HEK293 (cell line): ENCODE measurements at regions of chr19 and their contacts with region 1.

Region 1: GRCh38 chr19:46840136-46840942 is 10.3 kb downstream of the AP2S1 start:
- H3K4me3 ChIP-seq: no peak overlapping the region
- H3K27ac ChIP-seq: no peak overlapping the region
- H3K4me1 ChIP-seq: peaks cover 7% of the 10 kb centered on the region
- CTCF ChIP-seq: peak; percentile 90

Region 2: GRCh38 chr19:46713781-46714443 is 126.4 kb before region 1 on chr19:
- CTCF ChIA-PET with region 1: no interaction called
- POLR2A ChIA-PET with region 1: no interaction called
- H3K4me3 ChIP-seq: peak overlapping the region; percentile 40
- H3K27ac ChIP-seq: no peak overlapping the region
- H3K4me1 ChIP-seq: peaks cover 15% of the 10 kb centered on the region
- CTCF ChIP-seq: no peak

Region 3: DNA sequence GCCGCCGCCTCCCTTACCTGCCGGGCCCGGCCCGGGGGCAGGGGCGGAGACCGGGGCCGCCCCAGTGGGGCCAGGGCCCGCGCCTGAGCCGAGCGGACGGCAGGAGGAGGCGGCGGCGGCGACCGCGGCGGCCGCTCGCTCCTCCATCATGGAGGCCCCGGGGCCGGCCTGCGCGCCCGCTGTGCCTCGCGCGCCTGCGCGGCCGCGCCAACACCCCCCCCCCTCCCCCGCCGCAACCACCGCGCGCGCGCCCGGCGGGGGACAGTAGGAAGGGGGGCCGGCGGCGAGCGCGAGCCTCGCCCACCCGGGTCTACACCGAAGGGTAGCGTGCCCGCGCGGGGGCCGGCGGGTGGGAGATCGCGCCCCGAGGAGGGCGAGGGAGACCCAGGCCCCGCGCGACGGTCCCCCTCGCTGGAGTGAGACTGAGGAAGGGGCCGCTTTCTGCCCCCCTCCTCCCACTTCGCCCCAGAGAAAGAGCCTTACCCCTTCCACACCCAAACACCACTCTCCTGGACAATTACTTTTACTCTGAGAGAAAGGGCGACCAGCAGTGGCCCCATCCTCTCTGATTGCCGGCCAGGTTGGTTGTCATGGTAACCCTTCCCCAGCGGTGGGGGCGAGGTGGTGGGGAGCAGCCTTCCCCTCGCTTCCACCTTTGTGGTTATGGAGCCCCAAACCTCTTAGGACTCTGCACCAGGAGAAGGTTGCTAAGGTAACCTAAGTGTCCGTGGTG is 93.9 kb before region 1 on chr19 and contains the start of gene STRN4:
- CTCF ChIA-PET with region 1: interaction called, 35 read pairs
- POLR2A ChIA-PET with region 1: no interaction called
- H3K4me3 ChIP-seq: peak within 1 kb of the TSS; percentile 70
- H3K27ac ChIP-seq: peak within 1 kb of the TSS; percentile 99
- H3K4me1 ChIP-seq: peaks cover 6% of the 10 kb centered on the region
- CTCF ChIP-seq: no peak

Region 4: GRCh38 chr19:46759817-46760333 is 80.5 kb before region 1 on chr19:
- CTCF ChIA-PET with region 1: interaction called, 83 read pairs
- POLR2A ChIA-PET with region 1: interaction called, 5 read pairs
- H3K4me3 ChIP-seq: no peak overlapping the region
- H3K27ac ChIP-seq: no peak overlapping the region
- H3K4me1 ChIP-seq: peaks cover 3% of the 10 kb centered on the region
- CTCF ChIP-seq: no peak

Region 5: DNA sequence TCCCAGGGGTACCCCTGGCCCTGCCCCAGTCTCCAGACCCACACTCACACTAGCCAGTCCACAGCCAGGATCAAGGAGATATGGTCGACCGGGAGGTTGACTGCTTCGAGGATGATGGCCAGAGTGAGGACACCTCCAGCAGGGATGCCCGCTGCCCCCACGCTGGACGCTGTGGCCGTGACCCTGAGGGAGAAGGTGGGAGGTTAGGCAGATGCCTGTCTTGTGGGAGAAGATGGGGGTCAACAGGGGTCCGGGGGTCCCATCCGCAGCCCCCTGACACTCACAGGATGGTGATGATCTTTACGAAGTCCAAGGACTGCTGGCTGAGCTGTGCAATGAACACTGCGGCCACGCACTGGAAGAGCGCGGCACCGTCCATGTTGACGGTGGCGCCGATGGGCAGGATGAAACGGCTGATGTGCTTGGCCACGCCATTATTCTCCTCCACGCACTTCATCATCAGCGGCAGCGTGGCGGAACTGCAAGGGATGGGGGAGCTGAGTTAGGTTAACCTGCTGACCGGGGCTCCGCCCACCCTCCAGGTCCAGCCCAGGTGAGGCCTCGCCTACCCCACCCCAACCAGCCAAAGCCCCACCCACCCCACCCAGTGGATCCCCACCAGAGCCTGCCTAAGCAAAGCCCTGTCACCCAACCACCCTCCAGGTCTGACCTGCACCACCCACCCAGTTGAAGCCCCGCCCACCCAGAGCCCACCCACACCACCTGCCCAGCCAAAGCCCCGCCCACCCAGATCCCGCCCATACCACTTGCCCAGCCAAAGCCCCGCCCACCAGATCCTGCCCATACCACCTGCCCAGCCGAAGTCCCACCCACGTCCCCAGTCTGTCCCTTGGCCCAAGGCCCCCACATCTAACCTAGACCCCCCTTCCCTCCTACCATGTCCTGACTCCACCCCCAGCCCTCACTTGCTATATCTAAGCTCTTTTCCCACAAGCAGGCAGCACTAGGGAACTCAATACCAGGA is 63.1 kb before region 1 on chr19:
- CTCF ChIA-PET with region 1: interaction called, 5 read pairs
- POLR2A ChIA-PET with region 1: interaction called, 10 read pairs
- H3K4me3 ChIP-seq: no peak overlapping the region
- H3K27ac ChIP-seq: no peak overlapping the region
- H3K4me1 ChIP-seq: no peaks in the 10 kb centered on the region
- CTCF ChIP-seq: no peak

Region 6: GRCh38 chr19:46821498-46822409 is 18.6 kb before region 1 on chr19:
- CTCF ChIA-PET with region 1: interaction called, 11 read pairs
- POLR2A ChIA-PET with region 1: interaction called, 6 read pairs
- H3K4me3 ChIP-seq: no peak overlapping the region
- H3K27ac ChIP-seq: no peak overlapping the region
- H3K4me1 ChIP-seq: peaks cover 7% of the 10 kb centered on the region
- CTCF ChIP-seq: no peak

Region 7: GRCh38 chr19:46850228-46851203 is 10.2 kb after region 1 on chr19 and contains the start of gene AP2S1:
- CTCF ChIA-PET with region 1: interaction called, 15 read pairs
- POLR2A ChIA-PET with region 1: interaction called, 11 read pairs
- H3K4me3 ChIP-seq: peak within 1 kb of the TSS; percentile 78
- H3K27ac ChIP-seq: peak within 1 kb of the TSS; percentile 97
- H3K4me1 ChIP-seq: peaks cover 7% of the 10 kb centered on the region
- CTCF ChIP-seq: peak; percentile 39; the same call in 1 of the 2 replicates

Region 8: GRCh38 chr19:46862974-46863632 is 22.8 kb after region 1 on chr19:
- CTCF ChIA-PET with region 1: no interaction called
- POLR2A ChIA-PET with region 1: no interaction called
- H3K4me3 ChIP-seq: peak overlapping the region; percentile 76
- H3K27ac ChIP-seq: peak overlapping the region; percentile 63
- H3K4me1 ChIP-seq: peaks cover 44% of the 10 kb centered on the region
- CTCF ChIP-seq: no peak